Head of caudate nucleus (tissue), 42 donors: ENCODE measurements at regions of chr6 and their contacts with region 1.

Region 1: DNA sequence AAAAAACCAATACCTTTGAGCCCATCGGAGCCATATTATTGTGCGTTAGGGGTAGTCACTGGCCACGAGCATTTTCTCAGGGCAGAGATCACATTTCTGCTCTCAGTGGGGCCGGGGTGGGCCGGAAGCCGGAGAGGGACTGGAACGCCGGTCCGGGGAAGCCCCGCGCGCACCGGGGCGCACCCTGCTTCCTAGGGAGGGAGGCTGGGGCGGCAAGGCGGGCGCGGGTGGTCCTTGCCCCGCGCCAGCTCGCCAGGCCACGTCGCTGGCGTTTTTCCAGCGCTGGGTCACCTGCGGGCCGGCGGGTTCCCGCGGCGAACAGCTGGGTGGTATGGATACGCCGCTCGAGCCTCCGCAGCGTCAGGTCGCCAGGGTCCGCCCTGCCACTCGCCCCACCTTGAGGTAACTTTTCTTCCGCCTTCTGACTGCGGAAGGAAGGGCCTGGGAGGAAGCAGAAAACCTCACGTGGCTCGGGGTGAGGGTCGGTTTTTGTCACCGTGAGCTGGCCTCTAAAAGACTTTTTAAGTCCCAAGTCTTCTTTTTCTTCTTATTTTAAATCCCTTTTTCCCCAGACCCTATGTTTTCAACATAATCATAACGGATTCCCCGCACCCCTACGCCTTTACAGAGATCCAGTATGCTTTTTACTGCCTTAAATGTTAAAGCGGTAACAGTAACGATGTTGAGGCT is 2.7 kb upstream of the EEF1A1 start:
- DNase-seq: peak in 34 of 42 donors; percentile 10 to 65 (median 36)

Region 2: DNA sequence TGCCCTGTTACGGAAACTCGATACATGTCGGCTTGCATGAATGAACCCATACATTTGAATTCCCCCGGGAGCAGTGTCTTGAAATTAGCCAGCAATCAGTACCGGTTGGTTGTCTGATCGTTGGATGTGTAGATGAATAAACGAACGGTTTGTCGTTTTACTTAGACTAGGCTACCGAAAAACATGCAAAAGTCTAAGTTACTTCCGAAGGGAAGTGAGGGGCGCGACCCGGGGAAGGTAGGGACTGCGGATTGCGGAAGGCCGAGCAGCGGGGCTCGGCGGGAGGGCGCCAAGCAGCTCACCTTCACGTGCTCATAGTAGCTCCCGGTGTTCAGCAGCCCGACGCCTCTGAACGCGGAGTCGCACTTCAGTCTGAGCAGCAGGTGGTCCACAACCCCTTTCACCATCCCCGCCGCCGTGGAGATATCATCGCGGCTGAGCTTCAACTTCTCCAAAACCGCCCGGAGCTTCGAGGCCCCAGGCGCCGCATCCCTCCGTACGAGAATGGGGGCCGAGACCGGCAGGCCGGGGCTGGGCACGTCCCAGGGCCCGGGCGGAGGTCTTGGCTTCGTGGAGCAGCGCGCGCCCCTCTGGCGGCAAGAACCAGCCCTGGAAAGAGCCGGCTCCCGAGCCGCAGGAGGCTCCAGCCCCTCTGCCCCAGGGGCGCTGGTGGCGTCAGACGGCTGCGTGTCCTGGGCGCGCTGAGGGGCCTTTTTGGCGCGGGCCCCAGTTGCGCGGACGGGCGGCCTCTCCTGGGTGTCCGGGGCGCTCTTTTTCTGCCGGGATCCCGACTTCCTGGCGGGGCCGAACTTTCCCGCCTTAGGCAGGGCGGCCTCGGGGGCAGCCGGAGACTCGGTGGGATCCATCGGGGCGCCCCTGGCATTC is 72.1 kb before region 1 on chr6:
- intact Hi-C with region 1: loop called (anchors 10 kb)
- DNase-seq: peak in 28 of 42 donors; percentile 4 to 55 (median 20)

Region 3: GRCh38 chr6:73580247-73581149 is 56.9 kb after region 1 on chr6:
- intact Hi-C with region 1: loop called (anchors 2 kb)
- DNase-seq: peak; percentile 57 to 94 (median 84)

Region 4: DNA sequence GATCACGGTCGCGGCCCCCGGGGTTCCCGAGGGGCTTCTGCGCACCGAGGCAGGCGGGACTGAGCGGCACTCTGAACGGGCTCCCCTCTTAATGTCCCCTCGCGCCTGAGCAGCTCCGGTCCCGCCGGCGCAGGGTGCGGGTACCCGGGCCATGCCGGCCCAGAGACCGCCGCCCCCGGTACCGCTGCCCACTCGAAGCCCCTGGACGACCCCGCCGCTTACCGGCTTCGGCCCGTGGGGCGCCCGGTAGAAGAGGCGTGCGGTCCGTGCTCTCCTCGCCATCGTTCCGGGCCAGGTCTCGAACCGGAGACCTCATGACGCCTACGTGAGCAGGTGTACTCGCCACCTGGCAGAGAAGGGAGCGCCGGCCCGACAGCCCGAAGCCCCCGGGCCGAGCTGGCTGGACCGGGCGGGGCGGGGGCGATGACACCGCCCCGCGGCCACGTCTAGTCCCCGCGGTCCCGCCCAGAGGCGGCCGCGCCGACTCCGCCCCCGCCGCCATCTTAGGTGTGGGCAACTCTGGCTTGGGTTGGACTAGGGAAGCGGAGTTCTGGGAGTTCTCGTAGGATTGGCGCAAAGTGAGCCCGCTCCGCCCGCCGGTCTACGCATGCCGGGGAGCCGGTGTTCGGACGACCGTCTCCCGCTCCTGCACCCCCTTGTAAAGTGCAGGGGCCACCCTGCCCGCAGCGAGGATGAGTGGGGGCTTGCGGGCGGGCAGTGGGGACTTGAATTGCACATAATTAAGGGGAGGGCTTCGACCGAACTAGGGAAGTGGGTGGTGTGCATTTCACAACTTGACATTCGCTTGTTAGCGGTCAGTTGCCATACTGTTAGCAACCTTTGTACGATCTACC is 130.2 kb after region 1 on chr6 and contains the start of gene SLC17A5:
- intact Hi-C with region 1: loop called (anchors 5 kb)
- DNase-seq: peak; percentile 86 to 98 (median 94)